AG04449 (cell line): ENCODE measurements at regions of chr14 and their contacts with region 1.

Region 1: DNA sequence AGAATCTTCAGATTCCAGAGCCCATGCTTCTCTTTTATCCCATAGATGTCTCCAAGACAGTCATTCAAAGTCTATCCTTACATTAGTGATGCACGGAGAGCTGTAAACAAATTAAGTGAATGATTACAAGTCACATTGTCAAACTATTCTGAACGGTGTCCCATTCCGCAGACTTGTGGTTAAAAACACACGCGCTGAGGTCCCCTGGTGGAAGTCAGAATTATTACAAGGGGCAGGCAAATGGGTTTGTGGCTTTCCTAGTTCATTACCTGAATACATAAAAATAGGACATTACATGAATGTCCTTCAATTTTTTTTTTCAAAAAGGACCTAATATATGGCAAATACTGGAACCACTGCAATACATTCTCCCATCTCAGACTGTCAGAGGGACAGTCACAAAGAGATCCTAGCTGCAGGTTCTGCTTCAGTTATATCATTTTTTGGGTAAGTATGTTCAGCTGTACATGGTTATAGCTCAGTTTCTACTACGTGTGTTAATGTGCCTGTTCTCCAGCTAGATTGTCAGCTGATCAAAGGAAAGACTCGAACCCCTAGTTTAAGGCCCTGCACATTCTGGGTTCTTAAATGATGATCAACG is 53.1 kb upstream of the STON2 start:
- DNase-seq: no peak
- H3K4me3 ChIP-seq: no peak overlapping the region
- CTCF ChIP-seq: peak; percentile 74

Region 2: GRCh38 chr14:81269100-81269978 is 183.9 kb before region 1 on chr14:
- CTCF ChIA-PET with region 1: interaction called, 274 read pairs
- POLR2A ChIA-PET with region 1: no interaction called
- DNase-seq: peak; percentile 9
- H3K4me3 ChIP-seq: no peak overlapping the region
- CTCF ChIP-seq: peak; percentile 54

Region 3: DNA sequence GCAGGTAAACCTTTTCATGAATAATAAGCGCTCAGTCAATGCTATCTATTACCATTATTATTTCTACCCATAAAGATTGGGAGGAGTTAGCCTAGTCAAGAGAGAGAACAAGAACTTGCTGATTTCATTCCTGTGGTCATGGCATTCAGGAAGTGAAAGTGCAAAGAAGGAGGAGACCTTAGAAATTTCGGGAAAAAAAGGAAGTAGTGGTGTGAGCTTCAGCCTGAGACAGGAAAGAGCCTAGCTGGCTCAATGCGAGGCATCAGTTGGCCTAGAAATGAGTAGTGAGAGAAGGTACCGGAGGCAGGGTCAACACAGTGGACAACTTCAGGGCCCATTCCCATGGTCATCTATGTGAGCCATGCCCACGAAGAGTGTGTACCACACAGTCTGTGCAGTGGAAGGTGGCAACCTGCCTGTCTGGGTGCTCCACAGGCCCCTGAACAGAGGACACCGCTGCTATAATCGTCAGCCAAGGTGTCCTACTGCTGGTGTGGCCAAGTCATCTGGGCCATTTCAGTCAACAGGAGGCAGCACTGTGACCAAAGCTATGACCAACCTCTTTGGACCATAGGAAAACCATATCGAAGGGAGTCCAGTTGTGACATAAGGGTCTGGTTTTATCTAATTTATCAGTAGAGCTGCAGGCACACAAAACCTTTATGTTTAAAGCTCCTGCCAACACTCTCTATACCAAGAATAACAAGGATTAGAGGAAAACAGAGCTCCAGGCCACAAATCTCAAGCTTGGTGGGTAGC is 36.9 kb before region 1 on chr14:
- CTCF ChIA-PET with region 1: no interaction called
- POLR2A ChIA-PET with region 1: no interaction called
- DNase-seq: no peak
- H3K4me3 ChIP-seq: no peak overlapping the region
- CTCF ChIP-seq: no peak

Region 4: DNA sequence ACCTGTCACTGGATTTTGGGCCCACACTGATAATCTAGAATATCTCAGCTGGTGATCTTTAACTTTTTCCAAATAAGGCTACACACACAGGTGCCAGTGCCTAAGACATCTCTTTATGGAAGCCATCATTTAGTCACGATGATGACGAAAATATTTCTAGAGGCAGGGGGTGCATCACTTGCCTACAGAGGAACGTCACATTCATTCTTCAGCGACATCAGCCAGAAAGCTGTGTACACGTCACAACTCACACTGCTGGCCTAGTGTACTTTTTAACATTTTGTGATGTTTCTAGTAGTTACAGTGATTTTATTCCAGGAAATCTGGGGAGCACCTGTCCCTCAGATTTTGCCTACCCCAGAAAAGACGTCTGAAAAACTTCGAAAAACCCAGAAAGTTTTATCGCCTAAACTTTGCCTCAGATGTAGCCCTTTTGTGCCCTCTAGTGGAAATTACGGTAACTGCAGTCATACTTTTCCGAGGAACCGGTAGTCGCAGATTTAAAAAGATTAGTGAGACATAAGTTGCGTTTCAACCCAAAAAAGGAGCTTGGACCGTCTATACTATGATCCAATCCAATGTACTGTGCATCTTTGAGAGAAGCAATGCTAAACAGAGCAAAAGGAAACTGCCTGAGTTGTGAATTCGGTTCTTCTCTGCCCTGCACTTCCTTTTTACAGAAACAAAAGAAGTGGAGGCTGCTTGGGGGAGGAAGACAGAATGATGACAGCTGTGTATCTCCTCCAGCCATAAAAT is 11.2 kb after region 1 on chr14:
- CTCF ChIA-PET with region 1: interaction called, 47 read pairs
- POLR2A ChIA-PET with region 1: no interaction called
- DNase-seq: no peak
- H3K4me3 ChIP-seq: peak overlapping the region; percentile 60
- CTCF ChIP-seq: peak; percentile 72